ENCODE measurements at regions of chr5 and their contacts with region 1.

Region 1: DNA sequence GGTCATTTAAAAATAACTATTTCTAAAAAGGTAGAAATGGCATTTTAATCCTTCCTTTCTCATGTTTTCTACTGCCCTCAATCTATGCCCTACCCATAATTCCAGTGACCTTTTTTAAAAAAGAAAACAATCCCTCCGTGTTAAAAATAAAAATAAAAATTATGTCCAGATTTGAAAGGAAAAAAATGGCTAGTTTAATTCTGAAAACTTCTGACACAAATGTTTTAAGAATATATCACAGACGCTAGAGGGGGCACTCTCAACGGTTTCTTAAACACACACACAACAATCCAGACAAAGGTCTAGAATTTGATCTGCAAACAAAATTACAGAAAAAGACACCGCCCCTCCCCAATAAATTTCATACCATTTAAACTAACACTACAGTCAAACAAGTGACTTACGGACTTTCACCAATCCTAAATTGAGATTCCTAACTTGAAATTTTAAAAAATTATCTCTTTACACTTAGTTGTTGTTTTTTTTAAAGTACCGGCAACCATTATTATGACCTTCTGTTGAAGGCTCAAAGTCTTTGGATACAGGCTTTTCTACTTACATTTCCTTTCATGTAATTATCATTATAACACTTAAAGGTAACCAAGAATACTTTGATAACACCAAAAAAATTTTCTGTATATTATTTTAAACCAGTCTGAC is 38.2 kb downstream of the CLINT1 start:
- DNase-seq: peak; percentile 23
- H3K4me3 ChIP-seq: no peak overlapping the region
- H3K27ac ChIP-seq: no peak overlapping the region
- H3K4me1 ChIP-seq: no peaks in the 10 kb centered on the region
- H3K27me3 ChIP-seq: no peaks in the 10 kb centered on the region
- CTCF ChIP-seq: peak in 3 of 4 experiments; percentile 32 to 59 (median 55)
- POLR2A ChIP-seq: no peak

Region 2: GRCh38 chr5:157563373-157563928 is 257.3 kb before region 1 on chr5:
- intact Hi-C with region 1: no loop called
- DNase-seq: no peak
- H3K4me3 ChIP-seq: no peak overlapping the region
- H3K27ac ChIP-seq: peak overlapping the region; percentile 61 to 68
- H3K4me1 ChIP-seq: no peaks in the 10 kb centered on the region
- H3K27me3 ChIP-seq: no peaks in the 10 kb centered on the region
- CTCF ChIP-seq: no peak
- POLR2A ChIP-seq: no peak

Region 3: DNA sequence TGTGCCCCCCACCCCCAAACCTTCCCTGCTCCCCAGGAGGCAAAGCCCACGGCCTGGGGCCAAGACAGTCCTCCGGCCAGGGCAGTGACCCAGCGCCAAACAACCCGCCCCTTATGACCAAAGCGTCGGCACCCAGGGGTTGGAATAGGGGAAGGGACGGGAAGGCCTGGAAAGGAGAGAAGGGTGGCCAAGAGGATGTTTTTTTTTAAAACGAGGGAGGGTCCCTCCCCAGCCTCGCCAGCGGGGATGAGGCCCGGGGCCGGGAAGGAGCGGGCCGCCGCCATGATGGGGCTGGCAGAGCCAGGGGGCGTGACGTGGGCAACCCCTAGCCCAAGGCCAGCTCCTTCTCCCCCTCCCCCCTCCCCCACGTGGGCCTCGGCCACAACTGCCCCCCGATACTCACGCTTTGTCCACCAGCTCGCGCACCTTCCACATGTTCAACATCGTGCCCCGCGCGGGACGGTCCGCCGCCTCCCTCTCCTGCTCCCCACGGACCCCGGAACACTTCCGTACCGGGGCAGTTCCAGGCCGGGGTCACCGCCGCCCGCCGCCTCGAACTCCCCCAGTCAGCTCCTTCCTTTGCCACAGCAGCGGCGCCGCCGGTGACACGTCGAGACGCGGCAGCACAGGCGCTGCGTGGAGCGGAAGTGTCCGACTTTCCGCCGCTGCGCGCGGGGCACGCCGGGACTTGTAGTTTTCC is 38.0 kb after region 1 on chr5 and contains the start of gene CLINT1:
- intact Hi-C with region 1: loop called (anchors 5 kb)
- DNase-seq: peak; percentile 82
- H3K4me3 ChIP-seq: peak within 1 kb of the TSS; percentile 87 to 93
- H3K27ac ChIP-seq: peak within 1 kb of the TSS; percentile 72 to 80
- H3K4me1 ChIP-seq: peaks cover 4% of the 10 kb centered on the region
- H3K27me3 ChIP-seq: no peaks in the 10 kb centered on the region
- CTCF ChIP-seq: peak in 1 of 4 experiments; percentile 30
- POLR2A ChIP-seq: peak; percentile 82
- total RNA-seq, gene CLINT1: 65.1 to 84.5 TPM

Region 4: GRCh38 chr5:157948738-157949410 is 128.2 kb after region 1 on chr5:
- intact Hi-C with region 1: loop called (anchors 10 kb)
- DNase-seq: peak; percentile 91
- H3K4me3 ChIP-seq: no peak overlapping the region
- H3K27ac ChIP-seq: peak overlapping the region; percentile 35
- H3K4me1 ChIP-seq: no peaks in the 10 kb centered on the region
- H3K27me3 ChIP-seq: no peaks in the 10 kb centered on the region
- CTCF ChIP-seq: peak; percentile 61 to 90 (median 84)
- POLR2A ChIP-seq: no peak

Region 5: GRCh38 chr5:157994906-157995519 is 174.3 kb after region 1 on chr5:
- intact Hi-C with region 1: loop called (anchors 2 kb)
- DNase-seq: peak; percentile 49
- H3K4me3 ChIP-seq: no peak overlapping the region
- H3K27ac ChIP-seq: no peak overlapping the region
- H3K4me1 ChIP-seq: no peaks in the 10 kb centered on the region
- H3K27me3 ChIP-seq: no peaks in the 10 kb centered on the region
- CTCF ChIP-seq: peak; percentile 19 to 72 (median 54)
- POLR2A ChIP-seq: no peak

Region 6: DNA sequence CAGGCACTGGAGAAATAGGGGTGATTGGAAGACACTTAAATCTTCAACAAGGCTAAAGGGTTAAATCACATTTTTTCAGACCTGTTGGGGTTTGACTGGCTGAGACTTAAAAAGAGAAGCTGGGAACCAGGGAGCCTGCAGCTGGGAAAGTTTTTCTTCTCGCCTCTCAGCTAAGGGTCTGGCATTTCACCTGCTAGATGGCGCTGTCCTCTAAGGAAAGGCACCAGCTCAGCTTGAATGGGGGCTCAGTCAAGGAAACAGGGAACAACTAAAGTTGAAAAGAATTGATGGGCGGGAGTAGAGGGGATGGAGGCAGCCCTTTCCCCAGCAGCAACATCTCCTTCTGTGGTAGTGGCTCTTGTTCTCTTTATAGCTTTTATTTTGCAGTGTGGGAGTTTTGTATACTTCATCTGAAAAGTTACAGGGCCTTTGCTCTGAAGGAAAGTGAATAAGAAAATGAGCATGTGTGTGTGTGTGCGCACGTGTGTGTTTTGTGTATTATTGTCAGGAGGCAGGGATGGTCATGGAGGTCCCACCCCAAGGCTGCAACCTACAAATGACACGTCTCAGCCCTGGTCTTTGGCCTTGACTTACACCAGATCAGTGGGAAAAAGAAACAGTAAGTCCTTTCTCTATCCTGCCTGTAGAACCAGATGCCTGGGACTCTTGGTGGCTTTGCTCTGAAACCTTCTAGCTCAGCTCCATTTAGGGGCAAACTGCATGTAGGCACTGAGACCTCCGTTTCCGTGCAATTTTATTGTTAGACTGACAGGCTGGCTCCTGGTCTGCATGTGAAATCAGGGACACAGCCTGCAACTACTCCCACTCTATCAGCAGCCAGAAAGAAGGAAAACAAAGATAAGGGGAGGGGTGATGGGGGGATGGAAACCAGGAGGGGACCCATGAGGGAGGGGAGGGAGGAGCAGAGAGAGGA is 354.5 kb after region 1 on chr5:
- intact Hi-C with region 1: loop called (anchors 10 kb)
- DNase-seq: peak; percentile 55
- H3K4me3 ChIP-seq: no peak overlapping the region
- H3K27ac ChIP-seq: peak overlapping the region in 1 of 2 donors; percentile 33
- H3K4me1 ChIP-seq: peaks cover 4% of the 10 kb centered on the region
- H3K27me3 ChIP-seq: no peaks in the 10 kb centered on the region
- CTCF ChIP-seq: peak; percentile 19 to 70 (median 61)
- POLR2A ChIP-seq: no peak

Region 7: GRCh38 chr5:159106569-159107282 is 1286.0 kb after region 1 on chr5:
- intact Hi-C with region 1: loop called (anchors 10 kb)
- DNase-seq: no peak
- H3K4me3 ChIP-seq: no peak overlapping the region
- H3K27ac ChIP-seq: no peak overlapping the region
- H3K4me1 ChIP-seq: no peaks in the 10 kb centered on the region
- H3K27me3 ChIP-seq: peaks cover 15% of the 10 kb centered on the region
- CTCF ChIP-seq: peak; percentile 61 to 84 (median 76)
- POLR2A ChIP-seq: no peak

Measured in prostate gland (tissue), 2 donors.